CD8-positive, alpha-beta T cell (primary cell): ENCODE measurements at regions of chr11 and their contacts with region 1.

Region 1: GRCh38 chr11:117887981-117888566 is 11.6 kb upstream of the FXYD6 start:
- DNase-seq: peak in 1 of 9 experiments; percentile 34
- ATAC-seq: no peak
- H3K4me3 ChIP-seq: no peak overlapping the region
- H3K4me3 Mint-ChIP-seq: no peak overlapping the region
- H3K27ac ChIP-seq: no peak overlapping the region
- H3K27ac Mint-ChIP-seq: no peak overlapping the region
- H3K4me1 ChIP-seq: no peaks in the 10 kb centered on the region
- H3K4me1 Mint-ChIP-seq: no peaks in the 10 kb centered on the region
- H3K27me3 ChIP-seq: no peaks in the 10 kb centered on the region
- H3K27me3 Mint-ChIP-seq: peaks cover 5% of the 10 kb centered on the region
- CTCF ChIP-seq: no peak

Region 2: GRCh38 chr11:117851106-117851505 is 37.0 kb before region 1 on chr11:
- CTCF ChIA-PET with region 1: no interaction called
- POLR2A ChIA-PET with region 1: no interaction called
- intact Hi-C with region 1: loop called in 1 of 2 experiments (anchors 1 kb)
- DNase-seq: peak in 1 of 9 experiments; percentile 5
- ATAC-seq: no peak
- H3K4me3 ChIP-seq: no peak overlapping the region
- H3K4me3 Mint-ChIP-seq: no peak overlapping the region
- H3K27ac ChIP-seq: no peak overlapping the region
- H3K27ac Mint-ChIP-seq: no peak overlapping the region
- H3K4me1 ChIP-seq: no peaks in the 10 kb centered on the region
- H3K4me1 Mint-ChIP-seq: peaks cover 6% of the 10 kb centered on the region
- H3K27me3 ChIP-seq: peaks cover 0 to 2% of the 10 kb centered on the region in 2 experiments
- H3K27me3 Mint-ChIP-seq: no peaks in the 10 kb centered on the region
- CTCF ChIP-seq: no peak

Region 3: DNA sequence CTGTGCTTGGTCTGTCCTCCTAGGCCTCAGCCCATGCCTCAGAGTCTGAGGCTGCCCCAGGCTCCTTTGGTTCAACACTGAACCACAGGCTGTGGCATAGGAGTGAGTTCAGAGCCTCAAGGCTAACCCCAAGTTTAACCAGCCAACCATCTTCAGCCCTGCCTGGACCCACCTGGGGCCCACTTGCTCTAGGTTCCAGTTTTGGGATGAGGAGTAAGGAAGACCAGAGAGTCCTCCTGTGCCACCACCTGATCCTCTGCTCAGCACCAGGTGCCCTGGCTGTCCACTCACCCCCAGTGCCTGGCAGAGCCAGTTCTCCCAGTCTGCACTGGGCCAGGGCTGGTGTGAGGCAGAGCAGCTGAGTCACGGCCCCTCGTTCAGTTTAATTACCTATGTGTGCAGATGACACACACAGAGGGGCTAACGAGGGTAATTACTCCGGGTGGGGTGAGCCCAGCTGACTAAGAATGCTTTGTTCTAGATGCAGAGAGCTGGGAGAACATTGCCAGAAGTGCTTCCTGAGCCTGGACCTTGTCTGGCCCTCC is 53.2 kb after region 1 on chr11:
- CTCF ChIA-PET with region 1: no interaction called
- POLR2A ChIA-PET with region 1: interaction called, 5 read pairs
- intact Hi-C with region 1: loop called in 1 of 2 experiments (anchors 5 kb)
- DNase-seq: no peak
- ATAC-seq: no peak
- H3K4me3 ChIP-seq: no peak overlapping the region
- H3K4me3 Mint-ChIP-seq: no peak overlapping the region
- H3K27ac ChIP-seq: no peak overlapping the region
- H3K27ac Mint-ChIP-seq: no peak overlapping the region
- H3K4me1 ChIP-seq: no peaks in the 10 kb centered on the region
- H3K4me1 Mint-ChIP-seq: peaks cover 14% of the 10 kb centered on the region
- H3K27me3 ChIP-seq: no peaks in the 10 kb centered on the region
- H3K27me3 Mint-ChIP-seq: no peaks in the 10 kb centered on the region
- CTCF ChIP-seq: no peak